ENCODE measurements at regions of chr1 and their contacts with region 1.

Region 1: GRCh38 chr1:241611063-241611462 is 29.1 kb downstream of the CHML start:
- DNase-seq: peak; percentile 72
- ATAC-seq: peak; percentile 70
- H3K4me3 ChIP-seq: no peak overlapping the region
- H3K27ac ChIP-seq: no peak overlapping the region
- H3K4me1 ChIP-seq: peaks cover 28% of the 10 kb centered on the region
- H3K27me3 ChIP-seq: no peaks in the 10 kb centered on the region
- CTCF ChIP-seq: peak; percentile 67
- EP300 ChIP-seq: no peak
- POLR2A ChIP-seq: no peak
- RAD21 ChIP-seq: peak; percentile 58

Region 2: DNA sequence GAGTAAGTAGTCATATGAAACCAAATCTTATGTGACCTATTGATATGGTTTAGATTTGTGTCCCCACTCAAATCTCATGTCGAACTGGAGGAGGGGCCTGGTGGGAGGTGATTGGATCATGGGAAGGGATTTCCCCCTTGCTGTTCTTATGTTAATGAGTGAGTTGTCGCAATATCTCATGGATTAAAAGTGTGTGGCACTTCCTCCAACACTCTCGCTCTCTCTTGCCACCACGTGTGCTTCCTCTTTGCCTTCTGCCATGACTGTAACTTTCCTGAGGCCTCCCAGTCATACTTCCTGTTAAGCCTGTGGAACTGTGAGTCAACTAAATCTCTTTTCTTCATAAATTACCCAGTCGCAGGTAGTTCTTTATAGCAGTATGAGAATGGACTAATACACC is 495.3 kb before region 1 on chr1:
- CTCF ChIA-PET with region 1: no interaction called
- POLR2A ChIA-PET with region 1: no interaction called
- in situ Hi-C with region 1: no loop called
- intact Hi-C with region 1: no loop called
- DNase-seq: no peak
- ATAC-seq: no peak
- H3K4me3 ChIP-seq: no peak overlapping the region
- H3K27ac ChIP-seq: no peak overlapping the region
- H3K4me1 ChIP-seq: no peaks in the 10 kb centered on the region
- H3K27me3 ChIP-seq: no peaks in the 10 kb centered on the region; a peak in 1 of 5 replicates
- CTCF ChIP-seq: no peak
- EP300 ChIP-seq: no peak
- POLR2A ChIP-seq: no peak
- RAD21 ChIP-seq: no peak

Region 3: GRCh38 chr1:241627453-241628259 is 16.6 kb after region 1 on chr1:
- CTCF ChIA-PET with region 1: interaction called, 38 read pairs
- POLR2A ChIA-PET with region 1: interaction called, 7 read pairs
- in situ Hi-C with region 1: no loop called
- intact Hi-C with region 1: loop called (anchors 1 kb)
- DNase-seq: peak; percentile 60
- ATAC-seq: peak; percentile 74
- H3K4me3 ChIP-seq: no peak overlapping the region
- H3K27ac ChIP-seq: no peak overlapping the region
- H3K4me1 ChIP-seq: peaks cover 18% of the 10 kb centered on the region
- H3K27me3 ChIP-seq: no peaks in the 10 kb centered on the region
- CTCF ChIP-seq: peak; percentile 60
- EP300 ChIP-seq: no peak
- POLR2A ChIP-seq: no peak
- RAD21 ChIP-seq: no peak

Region 4: DNA sequence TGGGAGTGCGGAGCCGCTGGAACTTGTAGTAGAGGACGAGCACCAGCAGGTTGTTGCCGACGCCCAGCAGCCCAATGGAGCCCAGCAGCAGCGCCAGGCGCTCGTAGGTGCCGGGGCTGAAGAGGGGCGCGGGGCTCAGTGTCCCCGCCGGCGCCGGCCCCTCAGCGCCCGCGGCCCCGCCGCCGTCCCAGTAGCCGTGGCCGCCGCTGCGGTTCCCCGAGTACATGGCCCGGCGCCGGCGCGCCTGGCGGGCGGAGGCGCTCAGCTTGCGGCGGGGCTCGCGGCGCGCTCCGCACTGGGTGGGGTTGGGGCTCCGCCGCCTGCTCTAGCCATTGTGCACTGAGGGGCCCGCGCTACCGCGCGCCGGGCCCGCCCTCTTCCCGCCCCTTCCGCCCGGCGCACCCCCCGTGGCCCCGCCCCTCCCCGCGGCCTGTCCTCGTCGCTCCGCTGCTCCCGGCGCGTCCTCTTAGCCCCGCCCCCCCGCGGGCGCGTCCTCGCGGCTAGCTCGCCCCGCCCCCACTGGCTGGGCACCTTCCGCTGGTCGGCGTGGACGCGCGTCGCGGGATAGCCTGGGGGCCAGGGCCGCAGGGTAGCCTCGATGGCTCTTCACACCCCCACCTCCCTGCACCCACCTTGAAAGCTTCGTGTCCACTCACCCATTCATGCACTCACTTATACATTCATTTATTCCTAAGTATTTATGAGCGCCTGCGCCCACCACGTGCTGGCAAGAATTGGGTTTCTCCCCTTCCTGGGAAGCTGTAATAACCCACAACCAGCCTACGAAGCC is 29.2 kb after region 1 on chr1 and contains the starts of genes CHML and OPN3:
- CTCF ChIA-PET with region 1: interaction called, 3 read pairs
- POLR2A ChIA-PET with region 1: interaction called, 6 read pairs
- in situ Hi-C with region 1: no loop called
- intact Hi-C with region 1: loop called (anchors 1 kb)
- DNase-seq: peak; percentile 76
- ATAC-seq: peak; percentile 92
- H3K4me3 ChIP-seq: peak within 1 kb of the TSS; percentile 85 to 100 (median 99)
- H3K27ac ChIP-seq: peak within 1 kb of the TSS; percentile 91
- H3K4me1 ChIP-seq: peaks cover 47% of the 10 kb centered on the region
- H3K27me3 ChIP-seq: no peaks in the 10 kb centered on the region; a peak in 1 of 5 replicates
- CTCF ChIP-seq: no peak
- EP300 ChIP-seq: peak in 1 of 2 experiments; percentile 18; a peak in 1 of 4 replicates
- POLR2A ChIP-seq: peak; percentile 78 to 79
- RAD21 ChIP-seq: peak; percentile 52; the same call in 1 of the 2 replicates
- total RNA-seq, gene CHML: 16.7 and 21.0 TPM in 2 replicates
- total RNA-seq, gene OPN3: 17.2 and 17.4 TPM in 2 replicates

Region 5: GRCh38 chr1:241834733-241835377 is 223.8 kb after region 1 on chr1:
- CTCF ChIA-PET with region 1: interaction called, 17 read pairs
- POLR2A ChIA-PET with region 1: no interaction called
- in situ Hi-C with region 1: loop called (anchors 5 kb)
- intact Hi-C with region 1: loop called (anchors 1 kb)
- DNase-seq: peak; percentile 28
- ATAC-seq: peak; percentile 61
- H3K4me3 ChIP-seq: no peak overlapping the region
- H3K27ac ChIP-seq: no peak overlapping the region
- H3K4me1 ChIP-seq: no peaks in the 10 kb centered on the region
- H3K27me3 ChIP-seq: no peaks in the 10 kb centered on the region
- CTCF ChIP-seq: peak; percentile 47
- EP300 ChIP-seq: no peak
- POLR2A ChIP-seq: no peak
- RAD21 ChIP-seq: no peak

Region 6: DNA sequence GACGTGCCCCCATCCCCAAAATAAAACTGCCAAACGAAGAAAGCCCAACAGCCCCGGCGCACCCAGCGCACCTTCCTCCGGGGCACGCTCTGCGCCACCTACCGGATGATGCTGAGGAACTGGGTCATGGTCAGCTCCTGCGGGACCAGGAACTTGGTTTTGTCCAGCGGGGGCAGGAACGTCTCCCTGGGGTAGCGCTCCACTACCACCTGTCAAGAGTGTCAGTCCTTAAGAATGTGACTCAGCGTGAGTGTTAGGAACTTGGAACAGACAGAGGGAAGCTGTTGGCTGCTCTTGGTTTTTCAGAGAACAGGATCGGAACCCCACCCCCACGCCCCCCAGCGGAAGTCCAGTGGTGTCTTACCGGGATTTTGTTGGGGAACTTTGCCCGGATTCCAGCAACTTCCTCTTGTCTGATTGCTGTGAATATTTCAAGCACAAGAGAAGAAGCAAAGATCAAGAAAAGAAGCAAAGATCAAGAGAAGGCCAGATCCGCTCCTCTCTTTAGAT is 387.4 kb after region 1 on chr1:
- CTCF ChIA-PET with region 1: no interaction called
- POLR2A ChIA-PET with region 1: no interaction called
- in situ Hi-C with region 1: no loop called
- intact Hi-C with region 1: loop called (anchors 1 kb)
- DNase-seq: peak; percentile 23
- ATAC-seq: peak; percentile 93
- H3K4me3 ChIP-seq: peak overlapping the region in 2 of 3 experiments; percentile 24 to 53; a peak in 3 of 6 replicates
- H3K27ac ChIP-seq: no peak overlapping the region
- H3K4me1 ChIP-seq: no peaks in the 10 kb centered on the region
- H3K27me3 ChIP-seq: peaks cover 0 to 8% of the 10 kb centered on the region in 2 experiments; a peak in 1 of 5 replicates
- CTCF ChIP-seq: peak; percentile 72
- EP300 ChIP-seq: no peak
- POLR2A ChIP-seq: no peak
- RAD21 ChIP-seq: no peak